ENCODE measurements at regions of chr6 and their contacts with region 1.

Region 1: DNA sequence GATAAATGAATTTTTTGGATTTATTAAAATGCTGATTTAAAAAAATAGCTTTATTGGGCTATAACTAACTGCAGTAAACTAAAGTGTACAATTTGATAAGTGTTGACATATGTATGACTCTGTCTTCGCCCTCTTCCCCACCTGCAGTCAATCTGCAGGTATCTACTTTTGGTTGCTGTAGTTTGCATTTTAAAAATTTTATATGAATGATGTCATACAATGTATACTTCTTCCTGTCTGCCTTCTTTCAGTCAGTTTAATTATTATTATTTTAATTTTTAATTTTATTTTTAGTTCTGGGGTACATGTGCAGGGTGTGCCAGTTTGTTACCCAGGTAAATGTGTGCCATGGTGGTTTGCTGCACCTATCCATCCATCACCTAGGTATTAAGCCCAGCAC is 147.7 kb downstream of the CARMIL1 start:
- DNase-seq: no peak
- ATAC-seq: no peak
- H3K4me3 ChIP-seq: no peak overlapping the region
- H3K4me3 Mint-ChIP-seq: no peak overlapping the region
- H3K27ac ChIP-seq: no peak overlapping the region
- H3K27ac Mint-ChIP-seq: no peak overlapping the region
- H3K4me1 ChIP-seq: no peaks in the 10 kb centered on the region
- H3K4me1 Mint-ChIP-seq: peaks cover 0 to 42% (median 14%) of the 10 kb centered on the region in 7 donors
- H3K27me3 ChIP-seq: no peaks in the 10 kb centered on the region
- H3K27me3 Mint-ChIP-seq: no peaks in the 10 kb centered on the region

Region 2: DNA sequence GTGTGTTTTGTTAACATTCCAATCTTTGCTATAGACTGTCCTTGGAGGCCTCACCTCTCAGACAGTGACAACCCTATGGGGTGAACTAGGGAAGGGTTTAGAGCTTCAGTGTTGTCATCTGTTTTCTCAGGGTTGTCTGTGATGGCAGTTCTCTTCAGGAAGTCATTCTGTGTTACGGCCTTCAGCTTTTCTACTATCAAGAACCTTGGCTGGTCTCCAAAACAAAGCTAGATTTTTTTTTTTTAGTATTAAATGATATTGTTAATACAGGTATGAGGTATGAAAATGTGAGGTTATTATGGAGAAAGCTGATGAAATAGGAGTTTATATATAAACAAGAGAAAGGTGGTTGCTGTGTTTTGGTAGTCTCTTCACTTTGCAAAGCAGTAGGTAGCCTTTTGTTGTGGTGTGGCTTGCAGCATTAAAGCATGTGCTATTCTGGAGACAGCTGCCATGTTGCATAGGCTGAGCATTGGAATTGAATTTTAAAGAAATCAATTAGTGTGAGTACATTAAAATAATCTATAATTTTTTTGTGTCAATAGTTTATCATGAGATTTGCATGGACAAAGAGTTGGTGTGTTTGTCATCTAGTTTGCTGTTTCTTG is 14.9 kb after region 1 on chr6:
- CTCF ChIA-PET with region 1: no interaction called
- POLR2A ChIA-PET with region 1: interaction called, 9 read pairs
- intact Hi-C with region 1: loop called in 1 of 2 experiments (anchors 2 kb)
- DNase-seq: peak in 7 of 9 donors; percentile 49 to 75 (median 64)
- ATAC-seq: peak; percentile 84
- H3K4me3 ChIP-seq: no peak overlapping the region
- H3K4me3 Mint-ChIP-seq: peak overlapping the region in 7 of 10 donors; percentile 31 to 83 (median 49)
- H3K27ac ChIP-seq: peak overlapping the region; percentile 70
- H3K27ac Mint-ChIP-seq: peak overlapping the region in 4 of 9 donors; percentile 69 to 95 (median 86)
- H3K4me1 ChIP-seq: peaks cover 0 to 30% of the 10 kb centered on the region in 2 donors
- H3K4me1 Mint-ChIP-seq: peaks cover 6 to 37% (median 14%) of the 10 kb centered on the region in 7 donors
- H3K27me3 ChIP-seq: no peaks in the 10 kb centered on the region
- H3K27me3 Mint-ChIP-seq: no peaks in the 10 kb centered on the region